CD8-positive, alpha-beta memory T cell (primary cell): ENCODE measurements at regions of chr9 and their contacts with region 1.

Region 1: DNA sequence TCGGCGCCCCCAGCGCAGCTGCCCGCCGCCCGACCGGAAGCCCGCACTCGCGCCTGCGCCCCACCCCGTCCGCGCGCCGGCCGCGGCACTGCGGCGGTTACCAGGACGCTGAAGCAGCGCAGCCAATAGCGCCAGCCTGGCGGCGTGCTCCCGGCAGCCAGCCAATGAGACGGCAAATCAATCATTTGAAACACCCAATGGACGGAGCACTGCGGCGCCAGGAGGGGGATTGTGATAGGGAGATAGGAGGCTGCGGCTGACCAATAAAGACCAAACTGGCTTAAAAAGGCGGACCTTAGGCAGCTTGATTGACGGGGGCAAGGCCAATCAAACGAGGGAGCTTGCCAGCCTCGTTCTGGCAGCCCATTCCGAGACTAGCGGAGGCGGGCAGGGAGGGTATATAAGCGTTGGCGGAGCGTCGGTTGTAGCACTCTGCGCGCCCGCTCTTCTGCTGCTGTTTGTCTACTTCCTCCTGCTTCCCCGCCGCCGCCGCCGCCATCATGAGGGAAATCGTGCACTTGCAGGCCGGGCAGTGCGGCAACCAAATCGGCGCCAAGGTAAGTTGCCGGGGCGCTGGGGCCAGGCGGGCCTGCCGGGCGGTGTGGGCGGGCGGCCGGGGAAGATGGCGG is at the start of gene TUBB4B:
- DNase-seq: peak; percentile 92 to 100 (median 97)
- H3K4me3 ChIP-seq: peak within 1 kb of the TSS; percentile 60
- H3K4me3 Mint-ChIP-seq: peak within 1 kb of the TSS; percentile 88 to 95 (median 90)
- H3K27ac ChIP-seq: peak within 1 kb of the TSS; percentile 79
- H3K27ac Mint-ChIP-seq: peak within 1 kb of the TSS; percentile 82 to 95 (median 90)
- H3K4me1 ChIP-seq: peaks cover 20% of the 10 kb centered on the region
- H3K4me1 Mint-ChIP-seq: peaks cover 15 to 52% (median 17%) of the 10 kb centered on the region in 3 donors
- H3K27me3 ChIP-seq: no peaks in the 10 kb centered on the region
- H3K27me3 Mint-ChIP-seq: peaks cover 0 to 4% of the 10 kb centered on the region in 2 donors
- total RNA-seq, gene TUBB4B: 322 to 331 TPM

Region 2: GRCh38 chr9:137086531-137087408 is 154.2 kb before region 1 on chr9 and contains the start of gene MAN1B1:
- CTCF ChIA-PET with region 1: interaction called, 4 read pairs
- POLR2A ChIA-PET with region 1: interaction called, 15 read pairs
- DNase-seq: peak; percentile 99 to 100 (median 99)
- H3K4me3 ChIP-seq: peak within 1 kb of the TSS; percentile 88
- H3K4me3 Mint-ChIP-seq: peak within 1 kb of the TSS; percentile 86 to 93 (median 89)
- H3K27ac ChIP-seq: peak within 1 kb of the TSS; percentile 86
- H3K27ac Mint-ChIP-seq: peak within 1 kb of the TSS; percentile 86 to 99 (median 96)
- H3K4me1 ChIP-seq: peaks cover 19% of the 10 kb centered on the region
- H3K4me1 Mint-ChIP-seq: peaks cover 21 to 41% (median 23%) of the 10 kb centered on the region in 3 donors
- H3K27me3 ChIP-seq: no peaks in the 10 kb centered on the region
- H3K27me3 Mint-ChIP-seq: no peaks in the 10 kb centered on the region
- total RNA-seq, gene MAN1B1: 31.9 to 32.7 TPM

Region 3: DNA sequence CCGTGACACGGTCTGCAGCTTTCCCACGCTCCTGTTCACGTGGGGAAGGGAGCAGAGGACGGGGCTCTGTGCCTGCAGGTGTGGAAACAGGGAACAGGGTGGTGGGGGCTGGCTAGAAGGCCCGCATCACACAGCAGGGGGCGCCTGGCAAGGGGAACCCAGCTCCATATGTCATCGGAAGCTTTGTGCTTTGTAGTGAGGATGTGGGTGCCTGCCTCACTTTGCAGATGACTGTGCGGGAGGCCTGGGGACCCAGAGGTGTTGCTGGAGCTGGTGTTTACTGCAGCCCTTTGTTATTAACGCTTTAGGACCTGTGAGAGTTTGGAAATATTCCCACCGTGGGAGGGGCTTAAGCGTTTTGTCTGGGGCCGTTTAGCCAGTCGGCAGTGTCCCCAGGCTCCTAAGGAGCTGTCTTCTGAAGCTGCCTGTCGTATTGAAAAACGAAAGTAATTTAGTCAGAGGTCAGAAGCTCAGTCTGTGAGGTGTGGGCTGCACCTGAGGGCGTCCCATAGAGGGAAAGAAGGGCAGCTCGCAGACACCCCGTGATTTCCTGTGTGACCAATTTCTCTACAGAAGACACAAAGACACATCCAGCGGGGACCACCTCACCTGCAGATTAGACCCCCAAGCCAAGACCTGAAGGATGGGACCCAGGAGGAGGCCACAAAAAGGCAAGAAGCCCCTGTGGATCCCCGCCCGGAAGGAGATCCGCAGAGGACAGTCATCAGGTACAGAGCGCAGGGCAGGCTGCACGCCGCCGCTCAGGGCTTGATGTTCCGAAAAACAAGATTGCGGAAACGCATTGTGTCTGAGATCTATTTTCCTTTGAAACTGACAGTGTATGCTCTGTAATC is 145.1 kb before region 1 on chr9:
- CTCF ChIA-PET with region 1: interaction called, 11 read pairs
- POLR2A ChIA-PET with region 1: interaction called, 10 read pairs
- DNase-seq: peak; percentile 79 to 92 (median 90)
- H3K4me3 ChIP-seq: peak overlapping the region; percentile 74
- H3K4me3 Mint-ChIP-seq: peak overlapping the region; percentile 76 to 90 (median 84)
- H3K27ac ChIP-seq: peak overlapping the region; percentile 78
- H3K27ac Mint-ChIP-seq: peak overlapping the region; percentile 91 to 99 (median 98)
- H3K4me1 ChIP-seq: peaks cover 21% of the 10 kb centered on the region
- H3K4me1 Mint-ChIP-seq: peaks cover 23 to 27% (median 24%) of the 10 kb centered on the region in 3 donors
- H3K27me3 ChIP-seq: no peaks in the 10 kb centered on the region
- H3K27me3 Mint-ChIP-seq: no peaks in the 10 kb centered on the region

Region 4: DNA sequence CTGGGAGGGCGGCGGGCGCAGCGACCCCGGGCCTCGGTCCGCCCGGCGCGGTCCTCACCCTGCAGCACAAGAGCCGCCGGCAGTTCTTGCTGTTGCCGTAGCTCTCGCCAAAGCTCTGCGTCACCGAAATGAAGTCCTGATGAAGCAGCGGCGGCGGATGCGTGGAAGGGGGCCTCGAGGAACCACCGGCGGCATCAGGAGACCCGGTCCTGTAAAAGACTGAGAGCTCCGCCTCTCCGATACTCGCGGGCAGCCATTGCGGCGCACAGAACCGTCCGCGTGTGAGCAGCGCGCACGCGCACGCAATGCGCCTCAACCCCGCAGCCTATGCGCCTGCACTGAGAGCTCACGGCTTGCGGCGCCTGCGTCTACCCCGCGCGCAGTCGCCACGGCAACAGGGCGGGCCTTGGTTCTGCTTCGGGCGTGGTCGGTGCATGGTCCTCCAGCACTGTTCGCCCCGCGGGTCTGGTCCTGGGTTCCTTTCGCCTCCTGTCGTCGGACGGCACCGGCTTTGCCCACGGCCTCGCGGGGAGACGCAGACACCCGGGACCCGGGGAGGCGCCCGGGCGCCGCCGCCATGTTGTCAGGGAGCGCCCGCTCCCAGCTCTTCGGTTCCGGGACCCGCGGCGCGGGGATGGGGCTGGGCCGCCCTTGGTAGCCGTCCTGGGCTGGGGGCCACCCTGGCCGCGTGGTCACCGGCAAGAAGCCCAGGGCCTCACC is 111.4 kb before region 1 on chr9:
- CTCF ChIA-PET with region 1: interaction called, 10 read pairs
- POLR2A ChIA-PET with region 1: interaction called, 12 read pairs
- DNase-seq: peak; percentile 78 to 92 (median 89)
- H3K4me3 ChIP-seq: peak overlapping the region; percentile 78
- H3K4me3 Mint-ChIP-seq: peak overlapping the region; percentile 79 to 99 (median 88)
- H3K27ac ChIP-seq: peak overlapping the region; percentile 81
- H3K27ac Mint-ChIP-seq: peak overlapping the region; percentile 68 to 98 (median 88)
- H3K4me1 ChIP-seq: peaks cover 25% of the 10 kb centered on the region
- H3K4me1 Mint-ChIP-seq: peaks cover 27 to 36% (median 30%) of the 10 kb centered on the region in 3 donors
- H3K27me3 ChIP-seq: no peaks in the 10 kb centered on the region
- H3K27me3 Mint-ChIP-seq: peaks cover 11 to 20% of the 10 kb centered on the region in 2 donors

Region 5: DNA sequence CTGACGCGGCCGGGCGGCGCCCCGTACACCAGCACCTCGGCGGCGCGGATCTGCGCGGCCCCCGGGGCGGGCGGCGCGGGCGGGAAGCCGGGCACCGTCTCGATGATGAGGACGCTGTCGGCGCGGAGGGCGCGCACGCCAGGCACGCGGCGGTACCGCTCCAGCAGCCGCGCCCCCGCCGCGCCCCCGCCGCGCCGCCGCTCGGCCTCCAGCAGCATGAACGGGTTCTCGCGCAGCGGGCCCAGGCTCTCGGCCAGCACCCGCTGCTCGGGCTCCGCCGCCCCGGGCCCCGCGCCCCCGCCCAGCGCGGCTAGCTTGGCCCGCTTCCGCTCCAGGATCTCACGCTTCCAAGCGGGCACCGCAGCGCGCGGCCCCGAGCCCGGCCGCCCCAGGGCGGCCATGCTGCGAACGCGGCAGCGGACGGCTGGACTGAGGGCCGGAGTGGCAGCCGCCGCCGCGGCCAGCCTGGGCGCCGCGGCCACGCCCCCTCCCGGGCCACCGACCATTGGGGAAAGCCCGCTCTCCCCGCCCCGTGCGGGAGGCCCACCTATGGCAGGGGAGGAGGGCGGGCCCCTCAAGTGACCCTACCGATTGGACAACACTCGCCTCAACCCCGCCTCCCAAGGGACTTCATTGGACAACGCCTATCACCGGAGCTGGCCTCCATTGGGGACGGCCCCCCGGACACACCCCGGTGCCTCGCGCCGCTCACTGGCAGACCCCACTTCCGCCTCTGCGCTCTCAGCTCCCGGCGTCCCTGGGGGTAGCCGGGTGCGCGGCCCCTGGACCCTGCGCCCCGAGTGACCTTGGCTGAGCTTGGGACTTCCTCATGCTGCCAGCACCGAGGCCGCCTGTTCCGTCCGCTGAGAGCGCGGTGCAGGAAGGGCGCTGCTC is 40.4 kb before region 1 on chr9 and contains the start of gene TPRN:
- CTCF ChIA-PET with region 1: interaction called, 4 read pairs
- POLR2A ChIA-PET with region 1: interaction called, 14 read pairs
- DNase-seq: peak; percentile 95 to 99 (median 98)
- H3K4me3 ChIP-seq: peak within 1 kb of the TSS; percentile 78
- H3K4me3 Mint-ChIP-seq: peak within 1 kb of the TSS; percentile 79 to 98 (median 83)
- H3K27ac ChIP-seq: peak within 1 kb of the TSS; percentile 74
- H3K27ac Mint-ChIP-seq: peak within 1 kb of the TSS; percentile 66 to 97 (median 78)
- H3K4me1 ChIP-seq: peaks cover 30% of the 10 kb centered on the region
- H3K4me1 Mint-ChIP-seq: peaks cover 20 to 35% (median 21%) of the 10 kb centered on the region in 3 donors
- H3K27me3 ChIP-seq: no peaks in the 10 kb centered on the region
- H3K27me3 Mint-ChIP-seq: no peaks in the 10 kb centered on the region
- total RNA-seq, gene TPRN: 14.1 to 15.1 TPM

Region 6: DNA sequence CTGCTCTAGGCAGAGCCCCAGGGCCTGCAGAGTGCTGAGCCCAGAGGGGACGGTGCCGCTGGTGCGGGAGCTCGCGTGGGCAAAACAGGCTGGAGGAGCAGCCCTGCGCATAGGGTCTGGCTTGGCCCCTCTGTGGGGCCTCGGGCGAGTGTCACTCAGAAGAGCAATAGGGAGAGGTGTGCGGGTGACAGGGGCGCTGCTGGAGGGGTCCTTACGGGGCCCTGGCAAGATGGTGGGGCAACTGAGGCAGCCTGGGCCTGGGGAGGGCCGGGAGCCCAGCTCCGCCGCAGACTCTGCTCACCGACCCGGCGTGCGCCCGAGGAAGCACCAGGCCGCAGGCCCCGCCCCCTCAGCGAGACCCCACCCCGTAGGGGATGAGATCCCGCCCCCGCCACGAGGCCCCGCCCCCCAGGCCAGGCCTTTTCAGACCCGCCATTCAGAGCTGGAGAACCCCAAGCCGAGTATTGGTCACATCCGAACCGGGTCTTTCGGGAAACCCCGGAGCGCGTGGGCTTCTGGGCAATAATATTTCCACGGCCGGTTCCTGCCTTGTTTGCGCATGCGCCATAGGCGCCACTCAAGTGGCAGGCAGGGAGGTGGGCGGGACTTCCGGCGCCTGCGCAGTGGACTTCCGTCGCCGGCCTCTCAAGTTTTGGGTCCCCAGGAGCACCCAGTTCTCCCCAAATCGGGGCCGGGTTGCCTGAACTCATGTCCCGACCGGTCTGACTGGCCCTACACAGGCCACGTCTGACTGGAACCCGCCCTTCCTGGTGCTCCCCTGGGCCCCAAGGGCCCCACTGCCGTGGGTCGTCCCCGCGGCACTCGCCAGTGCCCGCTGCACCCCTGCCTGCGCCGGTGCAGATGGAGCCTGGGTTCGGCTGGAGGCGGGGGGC is 17.7 kb before region 1 on chr9:
- CTCF ChIA-PET with region 1: interaction called, 18 read pairs
- POLR2A ChIA-PET with region 1: interaction called, 23 read pairs
- DNase-seq: peak; percentile 95 to 99 (median 98)
- H3K4me3 ChIP-seq: peak overlapping the region; percentile 88
- H3K4me3 Mint-ChIP-seq: peak overlapping the region; percentile 71 to 85 (median 76)
- H3K27ac ChIP-seq: peak overlapping the region; percentile 74
- H3K27ac Mint-ChIP-seq: peak overlapping the region; percentile 51 to 91 (median 81)
- H3K4me1 ChIP-seq: peaks cover 13% of the 10 kb centered on the region
- H3K4me1 Mint-ChIP-seq: peaks cover 4 to 15% (median 5%) of the 10 kb centered on the region in 3 donors
- H3K27me3 ChIP-seq: no peaks in the 10 kb centered on the region
- H3K27me3 Mint-ChIP-seq: peaks cover 2 to 4% of the 10 kb centered on the region in 2 donors

Region 7: DNA sequence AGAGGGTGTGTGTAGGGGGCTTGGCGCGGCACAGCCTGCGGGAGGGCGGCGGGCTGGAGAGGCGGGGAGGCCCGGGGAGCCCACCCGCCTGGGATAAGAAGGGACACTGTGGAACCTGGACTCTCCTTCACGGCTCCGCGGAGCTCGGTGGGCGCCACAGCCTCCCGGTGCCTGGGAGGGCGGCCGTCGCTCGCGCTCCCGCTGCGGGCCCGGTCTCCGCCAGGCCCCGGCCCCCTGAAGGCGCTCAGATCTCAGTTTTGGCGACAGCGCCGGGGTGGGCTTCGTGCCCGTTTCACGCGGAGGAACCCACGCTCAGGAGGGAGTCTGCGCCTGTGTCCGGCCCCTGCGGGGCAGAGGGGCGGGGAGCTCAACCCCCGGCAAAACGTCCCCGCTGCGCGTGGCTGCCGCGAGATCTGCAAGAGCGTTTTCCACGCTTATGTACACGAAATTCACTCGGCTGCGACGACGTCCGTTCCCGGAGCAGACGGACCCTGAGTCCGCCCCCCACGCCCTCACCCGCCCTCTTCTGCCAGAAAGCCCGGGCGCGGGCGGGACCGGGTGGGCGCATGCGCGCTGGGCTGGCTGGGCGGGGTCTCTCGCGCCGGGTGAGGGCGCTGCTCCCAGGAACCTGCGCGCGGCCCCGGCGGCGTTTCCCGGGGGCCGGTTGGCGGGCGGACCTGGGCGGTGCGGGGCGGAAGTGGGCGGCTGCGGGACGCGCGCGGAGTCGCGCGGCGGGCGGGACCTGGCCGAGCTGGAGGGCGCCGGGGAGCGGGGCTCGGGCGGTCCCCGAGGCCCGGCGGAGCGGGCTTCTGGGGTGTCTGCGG is 13.9 kb after region 1 on chr9 and contains the start of gene NELFB:
- CTCF ChIA-PET with region 1: interaction called, 43 read pairs
- POLR2A ChIA-PET with region 1: interaction called, 83 read pairs
- DNase-seq: peak; percentile 94 to 97 (median 95)
- H3K4me3 ChIP-seq: peak within 1 kb of the TSS; percentile 77
- H3K4me3 Mint-ChIP-seq: peak within 1 kb of the TSS; percentile 86 to 96 (median 88)
- H3K27ac ChIP-seq: peak within 1 kb of the TSS; percentile 73
- H3K27ac Mint-ChIP-seq: peak within 1 kb of the TSS in 7 of 8 donors; percentile 61 to 97 (median 84)
- H3K4me1 ChIP-seq: peaks cover 18% of the 10 kb centered on the region
- H3K4me1 Mint-ChIP-seq: peaks cover 8 to 25% (median 11%) of the 10 kb centered on the region in 3 donors
- H3K27me3 ChIP-seq: no peaks in the 10 kb centered on the region
- H3K27me3 Mint-ChIP-seq: no peaks in the 10 kb centered on the region
- total RNA-seq, gene NELFB: 67.5 to 72.0 TPM

Region 8: GRCh38 chr9:137277329-137278041 is 36.5 kb after region 1 on chr9 and contains the start of gene TOR4A:
- CTCF ChIA-PET with region 1: no interaction called
- POLR2A ChIA-PET with region 1: no interaction called
- DNase-seq: no peak
- H3K4me3 ChIP-seq: peak within 1 kb of the TSS; percentile 41
- H3K4me3 Mint-ChIP-seq: peak within 1 kb of the TSS in 6 of 7 donors; percentile 47 to 86 (median 81)
- H3K27ac ChIP-seq: peak within 1 kb of the TSS; percentile 65
- H3K27ac Mint-ChIP-seq: peak within 1 kb of the TSS in 4 of 8 donors; percentile 47 to 74 (median 64)
- H3K4me1 ChIP-seq: peaks cover 11% of the 10 kb centered on the region
- H3K4me1 Mint-ChIP-seq: peaks cover 1 to 23% (median 4%) of the 10 kb centered on the region in 3 donors
- H3K27me3 ChIP-seq: no peaks in the 10 kb centered on the region
- H3K27me3 Mint-ChIP-seq: peaks cover 6 to 9% of the 10 kb centered on the region in 2 donors
- total RNA-seq, gene TOR4A: 3.3 to 3.9 TPM